Activated naive CD4-positive, alpha-beta T cell treated with anti-CD3 and anti-CD28 coated beads for 36 hours (primary cell): ENCODE measurements at regions of chrX and their contacts with region 1.

Region 1: GRCh38 chrX:23333842-23334520 is 668 bp upstream of the PTCHD1 start:
- DNase-seq: no peak
- H3K4me3 Mint-ChIP-seq: peak overlapping the region; percentile 15
- H3K27ac Mint-ChIP-seq: no peak overlapping the region
- H3K4me1 Mint-ChIP-seq: peaks cover 8% of the 10 kb centered on the region
- H3K27me3 Mint-ChIP-seq: peaks cover 47% of the 10 kb centered on the region

Region 2: DNA sequence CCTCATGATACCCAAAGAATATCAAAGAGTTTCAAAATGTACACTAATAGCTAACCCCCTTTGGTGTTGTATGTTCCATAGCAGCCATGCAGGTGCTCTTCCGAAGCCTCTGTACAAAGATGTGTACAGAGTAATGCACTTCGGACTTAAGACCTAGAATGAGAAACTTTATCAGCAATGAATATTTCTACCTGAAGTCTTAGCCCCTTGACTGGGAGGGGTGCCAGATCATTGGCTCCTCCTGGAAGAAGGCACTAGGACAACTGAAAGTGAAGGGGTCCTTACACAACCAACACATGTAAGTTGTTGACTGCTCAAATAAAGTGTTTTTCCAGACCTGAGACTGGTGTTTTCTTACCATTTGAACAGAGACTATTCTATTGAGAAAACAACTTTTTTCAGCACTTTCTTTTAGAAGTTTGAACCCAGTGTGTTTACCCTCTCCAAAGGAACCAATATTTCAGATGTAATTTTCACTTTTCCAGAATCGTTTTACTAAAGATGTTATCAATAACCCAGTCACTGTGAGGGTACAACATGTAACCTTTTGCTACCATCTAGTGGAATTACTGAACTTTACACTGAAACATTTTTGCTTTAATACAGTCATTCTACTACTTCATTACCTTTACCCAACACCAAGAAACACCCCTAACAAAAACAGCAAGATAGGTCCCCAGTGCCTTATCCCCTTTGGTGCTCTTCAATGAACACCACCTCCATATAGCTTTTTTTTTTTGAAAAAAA is 300.0 kb after region 1 on chrX:
- CTCF ChIA-PET with region 1: no interaction called
- intact Hi-C with region 1: loop called (anchors 10 kb)
- DNase-seq: no peak
- H3K4me3 Mint-ChIP-seq: no peak overlapping the region
- H3K27ac Mint-ChIP-seq: no peak overlapping the region
- H3K4me1 Mint-ChIP-seq: no peaks in the 10 kb centered on the region
- H3K27me3 Mint-ChIP-seq: no peaks in the 10 kb centered on the region